MCF 10A (cell line): ENCODE measurements at regions of chr9 and their contacts with region 1.

Region 1: DNA sequence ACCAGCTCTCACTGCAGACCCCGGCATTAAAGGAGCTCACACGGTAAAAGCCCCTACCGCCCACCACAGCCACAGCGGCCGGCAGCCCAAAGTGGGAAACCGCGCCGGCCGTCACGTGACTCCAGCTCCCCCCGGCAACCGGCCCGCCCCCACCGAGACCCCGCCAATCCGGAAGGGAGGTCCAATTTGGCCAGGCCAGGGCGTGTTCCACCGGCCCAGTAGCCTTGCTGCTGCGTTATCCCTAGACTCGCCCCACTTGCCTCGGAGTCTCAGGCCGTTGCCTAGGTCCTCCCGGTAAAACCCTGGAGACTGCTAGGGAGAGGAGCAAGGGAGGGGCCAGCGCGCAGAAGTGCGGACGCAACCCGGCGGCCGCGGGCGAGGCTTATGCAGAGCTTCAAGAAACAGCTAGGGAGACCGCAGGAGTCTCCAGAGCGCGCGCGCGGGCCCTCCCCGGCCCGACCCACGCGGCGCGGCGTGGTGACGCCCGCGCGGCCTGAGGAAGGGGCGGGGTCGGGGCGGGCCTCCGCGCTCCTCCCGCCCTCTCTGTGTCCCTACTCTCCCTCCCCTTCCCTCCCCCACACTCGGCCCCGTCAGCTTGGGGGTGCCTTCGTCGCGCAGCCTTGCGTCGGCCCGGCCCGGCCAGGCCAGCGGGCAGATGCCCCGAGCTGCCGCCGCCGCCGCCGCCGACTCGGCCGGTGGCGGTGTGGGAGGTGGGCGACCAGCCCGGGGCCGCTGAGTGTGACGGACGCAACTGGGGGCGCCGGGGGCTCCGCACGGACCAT is at the start of gene RIC1:
- DNase-seq: peak; percentile 89
- H3K4me3 Mint-ChIP-seq: peak within 1 kb of the TSS; percentile 88
- H3K27ac Mint-ChIP-seq: peak within 1 kb of the TSS; percentile 92
- H3K4me1 Mint-ChIP-seq: peaks cover 20% of the 10 kb centered on the region
- H3K27me3 Mint-ChIP-seq: no peaks in the 10 kb centered on the region
- CTCF ChIP-seq: no peak
- total RNA-seq, gene RIC1: 21.3 and 23.1 TPM in 2 replicates

Region 2: GRCh38 chr9:5536684-5537083 is 92.0 kb before region 1 on chr9:
- CTCF ChIA-PET with region 1: no interaction called
- POLR2A ChIA-PET with region 1: no interaction called
- intact Hi-C with region 1: no loop called
- DNase-seq: no peak
- H3K4me3 Mint-ChIP-seq: no peak overlapping the region
- H3K27ac Mint-ChIP-seq: no peak overlapping the region
- H3K4me1 Mint-ChIP-seq: no peaks in the 10 kb centered on the region
- H3K27me3 Mint-ChIP-seq: no peaks in the 10 kb centered on the region
- CTCF ChIP-seq: no peak

Region 3: GRCh38 chr9:5608298-5609225 is 20.2 kb before region 1 on chr9:
- CTCF ChIA-PET with region 1: interaction called, 4 read pairs
- POLR2A ChIA-PET with region 1: interaction called, 34 read pairs
- intact Hi-C with region 1: no loop called
- DNase-seq: peak; percentile 35
- H3K4me3 Mint-ChIP-seq: peak overlapping the region; percentile 57
- H3K27ac Mint-ChIP-seq: peak overlapping the region; percentile 47
- H3K4me1 Mint-ChIP-seq: no peaks in the 10 kb centered on the region
- H3K27me3 Mint-ChIP-seq: no peaks in the 10 kb centered on the region
- CTCF ChIP-seq: no peak

Region 4: GRCh38 chr9:5617749-5618148 is 11.0 kb before region 1 on chr9:
- CTCF ChIA-PET with region 1: no interaction called
- POLR2A ChIA-PET with region 1: interaction called, 20 read pairs
- intact Hi-C with region 1: no loop called
- DNase-seq: no peak
- H3K4me3 Mint-ChIP-seq: no peak overlapping the region
- H3K27ac Mint-ChIP-seq: no peak overlapping the region
- H3K4me1 Mint-ChIP-seq: peaks cover 6% of the 10 kb centered on the region
- H3K27me3 Mint-ChIP-seq: no peaks in the 10 kb centered on the region
- CTCF ChIP-seq: no peak

Region 5: DNA sequence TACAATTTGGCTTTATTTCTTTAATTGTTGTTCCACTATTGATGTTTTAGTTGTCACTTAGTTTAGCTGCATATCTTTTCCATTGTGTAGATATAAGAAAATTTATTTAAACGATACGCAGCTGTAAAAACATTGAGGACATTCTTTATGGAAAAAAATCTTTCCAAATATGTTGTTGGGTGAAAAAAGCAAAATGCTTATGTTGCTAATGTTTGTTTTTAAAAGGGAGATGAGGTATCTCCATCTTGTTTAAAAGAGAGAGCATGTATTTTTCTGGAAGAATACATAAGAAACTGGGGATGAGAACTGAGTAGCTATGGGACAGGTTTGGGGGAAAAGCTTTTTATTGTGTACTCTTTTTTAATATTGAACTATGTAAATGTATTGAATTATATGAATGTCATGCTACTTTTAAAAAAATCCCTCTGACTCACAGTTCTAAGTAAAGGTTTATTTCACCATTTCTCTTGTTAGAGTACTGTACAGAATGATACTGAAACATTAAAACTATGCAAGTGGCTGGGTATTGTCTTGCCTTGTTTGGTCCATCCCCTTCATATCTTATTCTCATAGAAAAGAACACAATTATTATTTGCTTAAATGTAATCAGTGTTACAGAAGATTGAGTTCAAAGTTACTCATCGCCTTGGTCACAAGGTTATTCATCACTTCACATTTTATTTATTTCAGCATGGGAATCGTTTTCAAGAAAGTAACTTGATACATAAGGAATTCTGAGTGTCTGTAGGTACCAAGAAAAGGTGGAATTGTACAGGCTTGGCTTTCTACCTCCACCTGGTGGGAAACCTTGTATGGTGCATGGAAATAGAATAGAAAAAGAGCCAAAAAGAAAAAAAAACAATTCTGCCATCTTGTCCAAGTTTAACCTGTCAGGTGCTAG is 86.0 kb after region 1 on chr9:
- CTCF ChIA-PET with region 1: interaction called, 4 read pairs
- POLR2A ChIA-PET with region 1: interaction called, 7 read pairs
- intact Hi-C with region 1: loop called (anchors 1 kb)
- DNase-seq: peak; percentile 60
- H3K4me3 Mint-ChIP-seq: no peak overlapping the region
- H3K27ac Mint-ChIP-seq: peak overlapping the region; percentile 47
- H3K4me1 Mint-ChIP-seq: peaks cover 6% of the 10 kb centered on the region
- H3K27me3 Mint-ChIP-seq: no peaks in the 10 kb centered on the region
- CTCF ChIP-seq: peak; percentile 70

Region 6: GRCh38 chr9:5764130-5764868 is 135.6 kb after region 1 on chr9:
- CTCF ChIA-PET with region 1: no interaction called
- POLR2A ChIA-PET with region 1: interaction called, 3 read pairs
- intact Hi-C with region 1: loop called (anchors 10 kb)
- DNase-seq: no peak
- H3K4me3 Mint-ChIP-seq: no peak overlapping the region
- H3K27ac Mint-ChIP-seq: no peak overlapping the region
- H3K4me1 Mint-ChIP-seq: no peaks in the 10 kb centered on the region
- H3K27me3 Mint-ChIP-seq: no peaks in the 10 kb centered on the region
- CTCF ChIP-seq: no peak